CD4-positive, alpha-beta memory T cell (primary cell): ENCODE measurements at regions of chr17 and their contacts with region 1.

Region 1: GRCh38 chr17:45317112-45317928 is 500 bp upstream of the MAP3K14 start:
- DNase-seq: peak; percentile 99 to 100 (median 100)
- H3K4me3 ChIP-seq: peak overlapping the region; percentile 48 to 92
- H3K4me3 Mint-ChIP-seq: peak overlapping the region; percentile 88 to 93 (median 91)
- H3K27ac ChIP-seq: peak overlapping the region; percentile 77
- H3K27ac Mint-ChIP-seq: peak overlapping the region; percentile 86 to 98 (median 97)
- H3K4me1 ChIP-seq: peaks cover 84% of the 10 kb centered on the region
- H3K4me1 Mint-ChIP-seq: peaks cover 60 to 91% (median 75%) of the 10 kb centered on the region in 4 donors
- H3K27me3 ChIP-seq: no peaks in the 10 kb centered on the region
- H3K27me3 Mint-ChIP-seq: no peaks in the 10 kb centered on the region

Region 2: DNA sequence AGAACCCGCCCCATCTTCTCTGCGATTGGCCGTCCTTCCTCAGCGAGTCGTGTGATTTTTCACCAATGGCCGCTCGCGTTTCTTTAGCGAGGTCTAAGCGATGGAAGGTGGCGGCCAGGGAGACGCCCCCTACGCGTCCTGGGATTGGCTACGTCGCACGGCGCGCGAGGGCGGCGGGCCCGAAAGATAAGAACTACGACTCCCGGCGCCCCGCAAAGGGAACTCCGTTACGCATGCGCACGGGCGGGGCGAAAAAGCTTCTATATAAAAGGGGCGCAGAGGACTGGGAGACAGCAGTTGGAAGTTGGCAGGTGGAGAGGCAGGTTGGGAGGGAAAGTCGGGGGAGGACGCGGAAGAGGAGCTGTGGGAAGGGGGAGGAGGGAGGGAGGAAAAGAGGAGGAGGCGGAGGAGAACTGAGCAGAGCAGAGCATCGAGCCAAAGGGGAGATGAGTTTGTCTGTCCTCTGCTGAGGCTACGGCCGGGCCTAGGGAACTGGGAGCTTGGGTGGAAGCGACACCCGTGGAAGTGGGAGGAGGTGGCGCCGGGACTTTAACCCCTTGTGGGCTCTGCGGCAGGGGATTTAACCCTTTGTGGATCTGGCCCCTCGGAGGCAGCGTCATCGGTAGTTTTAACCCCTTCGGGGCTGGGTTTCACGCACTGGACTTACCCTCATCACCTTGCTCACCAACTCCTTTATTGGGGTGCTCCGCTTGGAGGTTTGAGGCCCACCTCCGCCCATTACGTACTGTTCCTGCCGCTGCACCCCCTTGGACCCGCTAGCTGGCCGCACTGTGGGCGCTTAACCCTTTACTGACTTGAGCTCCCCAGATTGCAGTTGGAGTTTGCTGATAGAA is 168.9 kb before region 1 on chr17 and contains the start of gene HEXIM1:
- CTCF ChIA-PET with region 1: interaction called, 4 read pairs
- POLR2A ChIA-PET with region 1: interaction called, 39 read pairs
- intact Hi-C with region 1: no loop called
- DNase-seq: peak; percentile 99 to 100 (median 99)
- H3K4me3 ChIP-seq: peak within 1 kb of the TSS; percentile 90 to 95
- H3K4me3 Mint-ChIP-seq: peak within 1 kb of the TSS; percentile 93 to 99 (median 96)
- H3K27ac ChIP-seq: peak within 1 kb of the TSS; percentile 88
- H3K27ac Mint-ChIP-seq: peak within 1 kb of the TSS; percentile 98 to 100 (median 100)
- H3K4me1 ChIP-seq: peaks cover 59% of the 10 kb centered on the region
- H3K4me1 Mint-ChIP-seq: peaks cover 26 to 61% (median 44%) of the 10 kb centered on the region in 4 donors
- H3K27me3 ChIP-seq: no peaks in the 10 kb centered on the region
- H3K27me3 Mint-ChIP-seq: peaks cover 1 to 5% of the 10 kb centered on the region in 2 donors
- total RNA-seq, gene HEXIM1: 28.8 to 30.8 TPM

Region 3: DNA sequence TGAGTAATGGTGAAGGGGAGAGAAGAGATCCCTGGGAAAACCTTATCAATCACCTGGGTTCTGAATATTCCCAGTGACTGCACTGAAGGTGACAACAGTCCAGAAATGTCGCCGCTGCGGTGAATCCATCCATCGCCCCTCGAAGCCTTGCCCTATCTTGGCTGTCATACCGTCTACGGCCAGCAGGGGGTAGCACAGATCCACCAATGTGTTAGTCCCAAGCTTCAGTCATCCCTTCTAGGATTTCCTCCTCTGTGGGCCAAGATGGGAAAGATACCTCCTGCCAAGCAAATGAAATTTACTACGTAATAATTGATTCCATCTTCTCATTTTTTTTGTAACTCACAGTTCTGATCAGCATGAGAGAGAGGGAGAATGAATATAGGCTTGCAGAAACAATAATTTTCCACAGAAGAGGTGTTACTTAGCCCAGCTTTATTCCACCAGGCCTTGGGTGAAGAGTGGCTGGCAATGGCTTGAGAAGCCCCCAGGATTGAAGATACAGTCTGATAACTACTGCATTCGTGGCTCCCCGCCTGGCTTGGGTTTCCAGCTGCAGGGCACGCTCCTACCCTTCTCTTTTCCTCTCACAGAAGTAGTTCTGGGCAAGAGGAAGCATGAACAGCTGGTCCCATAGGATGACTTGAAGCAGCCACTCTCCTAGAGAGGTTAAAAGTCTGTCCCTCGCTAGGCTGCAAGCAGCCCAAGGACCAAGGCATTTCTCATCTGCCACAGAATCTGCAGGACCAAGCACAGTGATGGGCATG is 98.2 kb before region 1 on chr17:
- CTCF ChIA-PET with region 1: interaction called, 25 read pairs
- POLR2A ChIA-PET with region 1: interaction called, 324 read pairs
- intact Hi-C with region 1: no loop called
- DNase-seq: peak; percentile 77 to 84 (median 82)
- H3K4me3 ChIP-seq: peak overlapping the region in 1 of 2 donors; percentile 13
- H3K4me3 Mint-ChIP-seq: peak overlapping the region; percentile 88 to 95 (median 92)
- H3K27ac ChIP-seq: peak overlapping the region; percentile 12
- H3K27ac Mint-ChIP-seq: peak overlapping the region; percentile 84 to 94 (median 91)
- H3K4me1 ChIP-seq: peaks cover 29% of the 10 kb centered on the region
- H3K4me1 Mint-ChIP-seq: peaks cover 21 to 49% (median 24%) of the 10 kb centered on the region in 4 donors
- H3K27me3 ChIP-seq: no peaks in the 10 kb centered on the region
- H3K27me3 Mint-ChIP-seq: no peaks in the 10 kb centered on the region

Region 4: DNA sequence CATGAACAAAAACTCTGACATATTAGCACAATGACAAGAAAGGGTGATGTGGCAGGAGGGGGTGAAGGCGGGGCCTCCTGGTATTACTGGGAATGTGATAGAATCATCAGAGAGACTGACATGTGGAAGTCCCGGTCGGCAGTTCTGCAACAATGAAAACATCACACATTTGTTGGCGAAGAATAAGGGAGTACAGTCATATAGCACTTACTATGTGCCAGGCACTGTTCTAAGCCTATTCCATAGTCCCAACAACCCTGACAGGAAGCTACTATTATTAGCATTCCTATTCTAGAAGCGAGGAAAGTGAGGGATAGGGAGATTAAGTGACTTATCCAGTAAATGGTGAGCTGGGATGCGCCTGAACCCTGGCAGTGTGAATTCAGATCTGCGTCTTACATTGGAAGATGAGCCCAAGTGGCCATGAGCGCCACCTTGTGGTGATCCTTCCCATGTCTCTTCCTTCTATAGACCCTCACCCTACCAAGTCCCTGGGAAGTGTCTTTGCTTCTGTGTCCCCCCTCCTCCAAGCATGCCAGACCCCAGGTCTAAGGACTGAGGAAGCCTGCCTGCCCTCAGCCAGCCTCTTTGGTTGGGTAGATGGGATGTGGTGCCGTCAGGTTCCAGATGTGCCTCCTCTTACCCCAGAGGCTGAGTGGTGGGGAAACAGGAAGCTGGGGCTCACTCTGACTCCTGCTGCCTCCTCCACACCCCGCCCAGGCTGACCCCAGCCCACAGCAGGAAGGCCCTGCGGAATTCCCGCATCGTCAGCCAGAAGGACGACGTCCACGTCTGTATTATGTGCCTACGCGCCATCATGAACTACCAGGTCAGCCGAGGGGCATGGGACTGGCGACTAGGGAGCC is 81.7 kb before region 1 on chr17:
- CTCF ChIA-PET with region 1: interaction called, 11 read pairs
- POLR2A ChIA-PET with region 1: interaction called, 324 read pairs
- intact Hi-C with region 1: no loop called
- DNase-seq: peak; percentile 72 to 78 (median 73)
- H3K4me3 ChIP-seq: no peak overlapping the region
- H3K4me3 Mint-ChIP-seq: peak overlapping the region in 3 of 8 donors; percentile 17 to 63 (median 29)
- H3K27ac ChIP-seq: peak overlapping the region; percentile 57
- H3K27ac Mint-ChIP-seq: peak overlapping the region; percentile 88 to 99 (median 93)
- H3K4me1 ChIP-seq: peaks cover 54% of the 10 kb centered on the region
- H3K4me1 Mint-ChIP-seq: peaks cover 38 to 70% (median 53%) of the 10 kb centered on the region in 4 donors
- H3K27me3 ChIP-seq: no peaks in the 10 kb centered on the region
- H3K27me3 Mint-ChIP-seq: no peaks in the 10 kb centered on the region

Region 5: DNA sequence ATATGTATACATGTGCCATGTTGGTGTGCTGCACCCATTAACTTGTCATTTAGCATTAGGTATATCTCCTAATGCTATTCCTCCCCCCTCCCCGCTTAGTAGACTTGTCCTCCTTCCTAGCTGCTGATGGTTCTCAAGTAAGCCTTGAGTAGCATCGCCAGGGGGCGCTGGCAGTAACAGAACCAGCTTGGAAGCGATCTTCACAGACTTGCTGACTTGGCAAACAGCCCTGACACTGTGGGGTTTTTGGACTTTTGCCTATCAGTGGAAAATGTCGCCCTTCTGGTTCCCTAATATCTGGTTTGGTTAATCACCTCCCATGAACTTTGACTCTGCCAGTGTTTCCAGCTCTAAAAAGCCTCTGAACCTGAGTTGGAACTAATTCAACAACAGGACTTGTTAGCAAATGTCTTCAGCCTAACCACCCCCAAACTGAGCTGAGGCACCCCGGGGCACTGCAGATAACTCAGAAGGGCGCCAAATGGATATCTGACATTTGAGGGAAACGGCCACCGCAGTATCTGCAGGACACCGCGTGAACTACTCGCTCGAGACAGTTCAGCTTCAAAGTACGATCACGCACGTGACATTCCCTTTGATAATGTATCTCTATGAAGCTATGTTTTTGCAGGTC is 40.0 kb before region 1 on chr17:
- CTCF ChIA-PET with region 1: interaction called, 63 read pairs
- POLR2A ChIA-PET with region 1: interaction called, 49 read pairs
- intact Hi-C with region 1: loop called (anchors 1 kb)
- DNase-seq: peak; percentile 83 to 91 (median 85)
- H3K4me3 ChIP-seq: no peak overlapping the region
- H3K4me3 Mint-ChIP-seq: no peak overlapping the region
- H3K27ac ChIP-seq: no peak overlapping the region
- H3K27ac Mint-ChIP-seq: peak overlapping the region in 6 of 7 donors; percentile 15 to 86 (median 48)
- H3K4me1 ChIP-seq: peaks cover 6% of the 10 kb centered on the region
- H3K4me1 Mint-ChIP-seq: peaks cover 8 to 11% (median 10%) of the 10 kb centered on the region in 4 donors
- H3K27me3 ChIP-seq: no peaks in the 10 kb centered on the region
- H3K27me3 Mint-ChIP-seq: no peaks in the 10 kb centered on the region

Region 6: GRCh38 chr17:45296003-45296832 is 21.1 kb before region 1 on chr17:
- CTCF ChIA-PET with region 1: interaction called, 7 read pairs
- POLR2A ChIA-PET with region 1: interaction called, 69 read pairs
- intact Hi-C with region 1: loop called (anchors 2 kb)
- DNase-seq: no peak
- H3K4me3 ChIP-seq: no peak overlapping the region
- H3K4me3 Mint-ChIP-seq: peak overlapping the region in 4 of 8 donors; percentile 2 to 65 (median 46)
- H3K27ac ChIP-seq: no peak overlapping the region
- H3K27ac Mint-ChIP-seq: peak overlapping the region; percentile 30 to 93 (median 73)
- H3K4me1 ChIP-seq: peaks cover 89% of the 10 kb centered on the region
- H3K4me1 Mint-ChIP-seq: peaks cover 57 to 93% (median 71%) of the 10 kb centered on the region in 4 donors
- H3K27me3 ChIP-seq: no peaks in the 10 kb centered on the region
- H3K27me3 Mint-ChIP-seq: no peaks in the 10 kb centered on the region

Region 7: GRCh38 chr17:45385331-45385997 is 68.1 kb after region 1 on chr17:
- CTCF ChIA-PET with region 1: interaction called, 22 read pairs
- POLR2A ChIA-PET with region 1: interaction called, 5 read pairs
- intact Hi-C with region 1: loop called (anchors 2 kb)
- DNase-seq: peak; percentile 80 to 86 (median 82)
- H3K4me3 ChIP-seq: no peak overlapping the region
- H3K4me3 Mint-ChIP-seq: peak overlapping the region in 1 of 8 donors; percentile 11
- H3K27ac ChIP-seq: no peak overlapping the region
- H3K27ac Mint-ChIP-seq: peak overlapping the region in 3 of 7 donors; percentile 32 to 68 (median 50)
- H3K4me1 ChIP-seq: peaks cover 4% of the 10 kb centered on the region
- H3K4me1 Mint-ChIP-seq: peaks cover 0 to 6% (median 4%) of the 10 kb centered on the region in 4 donors
- H3K27me3 ChIP-seq: no peaks in the 10 kb centered on the region
- H3K27me3 Mint-ChIP-seq: peaks cover 5 to 9% of the 10 kb centered on the region in 2 donors